ENCODE measurements at regions of chr13 and their contacts with region 1.

Region 1: GRCh38 chr13:107799001-107799400 is 416.3 kb downstream of the LIG4 start:
- DNase-seq: peak; percentile 69
- ATAC-seq: peak; percentile 92
- H3K4me3 ChIP-seq: peak overlapping the region; percentile 45
- H3K27ac ChIP-seq: peak overlapping the region; percentile 49
- H3K4me1 ChIP-seq: peaks cover 23% of the 10 kb centered on the region
- H3K27me3 ChIP-seq: no peaks in the 10 kb centered on the region
- CTCF ChIP-seq: no peak

Region 2: DNA sequence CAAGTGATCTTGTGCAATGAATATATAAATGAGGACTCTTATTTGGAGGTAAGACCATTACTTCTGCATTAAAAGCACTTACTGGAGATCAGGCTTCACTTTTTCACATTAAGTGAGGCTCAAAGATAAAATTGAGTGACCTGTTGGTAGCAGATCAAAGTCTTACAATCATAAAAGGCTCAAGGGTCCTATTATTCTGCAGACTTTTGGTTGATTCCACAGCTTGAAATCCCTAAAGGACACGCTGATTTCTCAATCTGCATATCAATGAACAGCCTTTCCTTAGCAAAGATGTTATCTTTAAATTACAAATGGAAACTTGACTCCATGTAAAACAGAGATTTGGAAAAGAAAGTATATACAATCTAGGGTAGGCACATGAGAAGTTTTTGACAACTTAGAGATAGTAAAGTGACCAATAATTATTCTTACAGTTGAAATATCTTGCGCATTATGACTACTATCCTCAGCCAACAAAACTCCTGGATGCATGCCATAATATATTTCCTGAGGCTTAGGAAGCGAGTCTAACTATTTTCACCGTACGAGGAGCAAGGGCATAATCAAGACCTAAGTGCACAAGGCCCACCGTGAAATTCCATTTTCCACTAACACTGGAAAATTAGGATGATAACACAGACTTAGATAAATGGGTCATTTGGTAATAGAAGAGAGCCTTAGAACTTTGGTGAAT is 224.3 kb before region 1 on chr13:
- CTCF ChIA-PET with region 1: no interaction called
- POLR2A ChIA-PET with region 1: no interaction called
- intact Hi-C with region 1: no loop called
- DNase-seq: no peak
- ATAC-seq: no peak
- H3K4me3 ChIP-seq: no peak overlapping the region
- H3K27ac ChIP-seq: no peak overlapping the region
- H3K4me1 ChIP-seq: no peaks in the 10 kb centered on the region
- H3K27me3 ChIP-seq: no peaks in the 10 kb centered on the region
- CTCF ChIP-seq: no peak

Region 3: GRCh38 chr13:107767119-107767518 is 31.9 kb before region 1 on chr13:
- CTCF ChIA-PET with region 1: no interaction called
- POLR2A ChIA-PET with region 1: no interaction called
- intact Hi-C with region 1: loop called (anchors 2 kb)
- DNase-seq: peak; percentile 38
- ATAC-seq: peak; percentile 11; the same call in 1 of the 2 replicates
- H3K4me3 ChIP-seq: no peak overlapping the region
- H3K27ac ChIP-seq: no peak overlapping the region
- H3K4me1 ChIP-seq: peaks cover 30% of the 10 kb centered on the region
- H3K27me3 ChIP-seq: no peaks in the 10 kb centered on the region
- CTCF ChIP-seq: no peak

Region 4: GRCh38 chr13:107883561-107884175 is 84.7 kb after region 1 on chr13:
- CTCF ChIA-PET with region 1: no interaction called
- POLR2A ChIA-PET with region 1: no interaction called
- intact Hi-C with region 1: no loop called
- DNase-seq: peak; percentile 93
- ATAC-seq: peak; percentile 80
- H3K4me3 ChIP-seq: peak overlapping the region; percentile 58
- H3K27ac ChIP-seq: peak overlapping the region; percentile 76
- H3K4me1 ChIP-seq: peaks cover 59% of the 10 kb centered on the region
- H3K27me3 ChIP-seq: no peaks in the 10 kb centered on the region
- CTCF ChIP-seq: no peak

Region 5: DNA sequence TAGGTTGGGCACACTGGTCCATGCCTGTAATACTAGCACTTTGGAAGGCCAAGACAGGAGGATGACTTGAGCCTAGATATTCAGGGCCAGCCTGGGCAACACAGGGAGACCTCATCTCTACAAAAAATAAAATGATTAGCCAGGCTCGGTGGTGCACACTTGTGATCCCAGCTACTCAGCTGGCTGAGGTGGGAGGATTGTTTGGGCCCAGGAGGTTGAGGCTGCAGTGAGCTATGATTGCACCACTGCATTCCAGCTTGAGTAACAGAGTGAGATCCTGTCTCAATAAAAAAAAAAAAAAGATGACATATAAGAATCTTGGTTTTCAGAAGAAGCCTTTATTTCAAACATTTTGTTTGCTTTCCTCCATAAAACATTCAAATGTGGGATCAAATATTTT is 238.3 kb after region 1 on chr13:
- CTCF ChIA-PET with region 1: no interaction called
- POLR2A ChIA-PET with region 1: no interaction called
- intact Hi-C with region 1: no loop called
- DNase-seq: no peak
- ATAC-seq: no peak
- H3K4me3 ChIP-seq: no peak overlapping the region
- H3K27ac ChIP-seq: no peak overlapping the region
- H3K4me1 ChIP-seq: peaks cover 3% of the 10 kb centered on the region; the same call in 1 of the 2 replicates
- H3K27me3 ChIP-seq: no peaks in the 10 kb centered on the region
- CTCF ChIP-seq: no peak

Region 6: DNA sequence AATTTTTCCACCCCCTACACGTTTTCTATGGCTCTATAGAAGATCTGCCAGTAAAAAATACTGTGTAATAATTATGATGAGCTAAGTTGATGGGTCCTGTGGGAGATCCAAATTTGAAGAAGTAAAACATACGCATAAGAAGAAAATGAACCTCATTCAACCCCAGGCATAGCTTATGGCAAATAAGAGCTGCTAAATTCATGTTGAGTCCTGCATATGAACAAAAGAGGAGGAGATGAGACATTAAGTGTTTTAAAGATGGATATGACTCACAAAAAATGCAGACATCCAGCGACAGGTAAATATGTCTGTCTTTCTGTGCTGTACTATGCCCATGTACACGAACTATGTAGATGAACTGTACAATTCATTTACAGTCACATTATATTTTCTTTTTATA is 314.4 kb after region 1 on chr13:
- CTCF ChIA-PET with region 1: no interaction called
- POLR2A ChIA-PET with region 1: no interaction called
- intact Hi-C with region 1: no loop called
- DNase-seq: no peak
- ATAC-seq: no peak
- H3K4me3 ChIP-seq: no peak overlapping the region
- H3K27ac ChIP-seq: no peak overlapping the region
- H3K4me1 ChIP-seq: no peaks in the 10 kb centered on the region
- H3K27me3 ChIP-seq: no peaks in the 10 kb centered on the region
- CTCF ChIP-seq: no peak

Measured in PC-3 (cell line).